ENCODE measurements at regions of chr15 and their contacts with region 1.

Region 1: GRCh38 chr15:63048115-63048775 is 5.7 kb downstream of the TPM1 start:
- DNase-seq: peak; percentile 83
- H3K4me3 Mint-ChIP-seq: peak overlapping the region; percentile 96
- H3K27ac Mint-ChIP-seq: peak overlapping the region; percentile 76
- H3K4me1 Mint-ChIP-seq: peaks cover 68% of the 10 kb centered on the region
- H3K27me3 Mint-ChIP-seq: no peaks in the 10 kb centered on the region
- CTCF ChIP-seq: peak; percentile 95

Region 2: DNA sequence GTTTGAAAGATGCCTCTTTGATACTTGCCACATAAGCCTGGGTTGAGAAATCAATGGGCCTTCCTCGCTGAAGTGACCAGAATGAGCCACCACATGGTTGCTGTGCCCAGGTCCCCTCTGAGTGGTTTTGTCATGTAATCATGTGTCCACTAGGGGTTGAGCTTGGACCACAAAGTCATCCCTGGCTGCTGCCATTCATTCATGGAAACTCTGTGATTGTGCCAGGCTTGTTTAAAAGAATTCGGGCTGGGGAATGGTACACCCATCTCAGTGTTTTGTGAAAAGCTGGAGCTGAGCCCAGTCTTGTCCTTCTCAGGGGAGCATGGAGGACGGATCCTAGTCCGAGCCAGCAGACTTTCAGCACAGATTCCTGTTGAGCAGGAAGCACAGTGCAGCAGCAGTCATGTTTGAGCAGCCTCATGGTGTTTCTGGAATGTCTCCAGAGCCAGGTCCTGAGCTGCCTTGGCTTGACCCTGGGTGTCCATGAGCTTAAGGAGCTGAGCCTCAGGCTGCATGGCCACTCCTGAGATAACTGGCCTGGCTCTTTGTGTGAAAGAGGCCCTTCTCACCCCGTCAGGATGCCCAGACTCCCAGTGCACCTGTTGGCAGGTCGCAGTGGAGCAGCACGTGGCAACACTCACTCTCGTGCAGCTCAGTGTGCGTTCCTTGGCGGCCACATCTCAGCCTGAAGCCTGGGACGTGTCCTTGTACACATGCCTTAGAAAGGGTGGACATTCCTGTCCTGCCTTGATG is 266.0 kb before region 1 on chr15:
- CTCF ChIA-PET with region 1: interaction called, 7 read pairs
- POLR2A ChIA-PET with region 1: no interaction called
- intact Hi-C with region 1: loop called (anchors 1 kb)
- DNase-seq: peak; percentile 86
- H3K4me3 Mint-ChIP-seq: no peak overlapping the region
- H3K27ac Mint-ChIP-seq: no peak overlapping the region
- H3K4me1 Mint-ChIP-seq: peaks cover 28% of the 10 kb centered on the region
- H3K27me3 Mint-ChIP-seq: no peaks in the 10 kb centered on the region
- CTCF ChIP-seq: peak; percentile 71

Region 3: GRCh38 chr15:62896978-62897647 is 151.1 kb before region 1 on chr15:
- CTCF ChIA-PET with region 1: interaction called, 12 read pairs
- POLR2A ChIA-PET with region 1: interaction called, 43 read pairs
- intact Hi-C with region 1: loop called (anchors 5 kb)
- DNase-seq: peak; percentile 98
- H3K4me3 Mint-ChIP-seq: peak overlapping the region; percentile 69
- H3K27ac Mint-ChIP-seq: peak overlapping the region; percentile 90
- H3K4me1 Mint-ChIP-seq: peaks cover 63% of the 10 kb centered on the region
- H3K27me3 Mint-ChIP-seq: no peaks in the 10 kb centered on the region
- CTCF ChIP-seq: no peak

Region 4: DNA sequence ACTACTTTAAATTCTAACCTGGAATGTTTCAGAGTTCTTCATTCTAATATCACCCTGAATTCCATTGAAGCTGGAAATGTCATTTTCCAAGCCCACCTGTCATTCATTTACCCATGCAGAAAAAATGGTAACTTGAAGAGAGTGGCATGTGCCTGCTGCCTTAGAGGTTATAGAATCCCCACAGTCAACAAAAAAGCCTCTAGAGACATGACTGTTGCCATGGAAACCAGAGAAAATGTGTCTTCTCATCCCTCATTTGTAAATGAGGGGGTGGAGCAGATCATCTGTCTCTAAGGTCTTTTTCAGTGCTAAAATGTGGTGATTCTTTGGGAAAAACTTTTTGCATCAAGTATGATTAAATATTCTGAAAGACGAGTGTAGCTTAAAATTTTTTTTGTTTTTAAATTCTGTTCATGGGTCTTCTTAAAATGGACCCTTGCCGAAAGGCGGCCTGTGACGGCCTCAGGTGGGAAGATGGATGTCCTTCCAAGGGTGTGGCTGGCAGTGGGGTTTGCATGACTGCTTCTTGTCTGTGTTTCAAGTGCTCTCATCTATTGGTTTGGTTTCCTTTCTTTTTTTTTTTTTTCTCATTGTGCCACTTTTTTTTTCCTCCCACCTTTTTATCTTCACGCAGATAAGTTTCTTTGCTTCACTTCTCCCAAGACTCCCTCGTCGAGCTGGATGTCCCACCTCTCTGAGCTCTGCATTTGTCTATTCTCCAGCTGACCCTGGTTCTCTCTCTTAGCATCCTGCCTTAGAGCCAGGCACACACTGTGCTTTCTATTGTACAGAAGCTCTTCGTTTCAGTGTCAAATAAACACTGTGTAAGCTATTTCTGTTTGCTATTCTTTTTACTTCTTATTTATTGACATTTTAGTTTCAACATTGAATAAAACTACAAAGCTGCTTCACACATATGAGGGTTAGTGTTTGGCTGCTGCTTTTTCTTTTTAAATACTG is 17.3 kb after region 1 on chr15:
- CTCF ChIA-PET with region 1: interaction called, 12 read pairs
- POLR2A ChIA-PET with region 1: interaction called, 12 read pairs
- intact Hi-C with region 1: no loop called
- DNase-seq: no peak
- H3K4me3 Mint-ChIP-seq: no peak overlapping the region
- H3K27ac Mint-ChIP-seq: peak overlapping the region; percentile 75
- H3K4me1 Mint-ChIP-seq: no peaks in the 10 kb centered on the region
- H3K27me3 Mint-ChIP-seq: no peaks in the 10 kb centered on the region
- CTCF ChIP-seq: no peak

Region 5: DNA sequence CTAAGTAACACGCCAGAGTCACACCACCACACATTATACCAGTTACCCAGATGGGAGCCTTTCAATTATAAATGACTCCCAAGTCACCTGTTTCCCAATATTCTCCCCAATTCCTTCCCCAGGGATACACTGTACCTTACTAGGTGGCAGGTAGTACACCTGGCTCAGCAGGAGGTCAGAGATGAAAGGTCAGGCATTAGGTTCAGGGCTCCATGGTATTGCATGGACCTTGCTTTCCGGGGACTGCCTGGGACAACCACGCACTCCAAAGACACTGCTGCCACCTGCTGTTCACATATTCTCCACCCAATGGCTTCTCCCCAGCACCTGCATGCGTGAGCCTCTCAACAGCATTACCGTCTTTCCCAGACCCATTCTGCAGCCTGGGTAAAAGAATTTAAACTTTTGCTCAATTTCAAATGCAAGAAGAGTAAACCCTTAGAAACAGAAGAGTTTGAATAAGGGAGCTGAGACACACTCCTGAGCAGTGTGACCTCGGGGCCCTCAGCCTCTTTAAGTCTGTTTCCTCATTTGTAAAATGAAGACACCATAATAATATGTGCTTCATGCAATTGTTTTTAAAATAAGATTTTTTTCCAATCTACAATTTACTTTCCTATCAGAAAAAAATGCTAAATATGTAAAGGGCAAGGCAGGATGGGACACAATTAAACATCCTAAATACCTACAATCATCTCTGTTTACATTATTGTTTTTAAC is 45.4 kb after region 1 on chr15:
- CTCF ChIA-PET with region 1: interaction called, 109 read pairs
- POLR2A ChIA-PET with region 1: interaction called, 17 read pairs
- intact Hi-C with region 1: loop called (anchors 1 kb)
- DNase-seq: peak; percentile 82
- H3K4me3 Mint-ChIP-seq: no peak overlapping the region
- H3K27ac Mint-ChIP-seq: no peak overlapping the region
- H3K4me1 Mint-ChIP-seq: peaks cover 7% of the 10 kb centered on the region
- H3K27me3 Mint-ChIP-seq: no peaks in the 10 kb centered on the region
- CTCF ChIP-seq: peak; percentile 85